WTC11 (cell line): ENCODE measurements at regions of chr5 and their contacts with region 1.

Region 1: DNA sequence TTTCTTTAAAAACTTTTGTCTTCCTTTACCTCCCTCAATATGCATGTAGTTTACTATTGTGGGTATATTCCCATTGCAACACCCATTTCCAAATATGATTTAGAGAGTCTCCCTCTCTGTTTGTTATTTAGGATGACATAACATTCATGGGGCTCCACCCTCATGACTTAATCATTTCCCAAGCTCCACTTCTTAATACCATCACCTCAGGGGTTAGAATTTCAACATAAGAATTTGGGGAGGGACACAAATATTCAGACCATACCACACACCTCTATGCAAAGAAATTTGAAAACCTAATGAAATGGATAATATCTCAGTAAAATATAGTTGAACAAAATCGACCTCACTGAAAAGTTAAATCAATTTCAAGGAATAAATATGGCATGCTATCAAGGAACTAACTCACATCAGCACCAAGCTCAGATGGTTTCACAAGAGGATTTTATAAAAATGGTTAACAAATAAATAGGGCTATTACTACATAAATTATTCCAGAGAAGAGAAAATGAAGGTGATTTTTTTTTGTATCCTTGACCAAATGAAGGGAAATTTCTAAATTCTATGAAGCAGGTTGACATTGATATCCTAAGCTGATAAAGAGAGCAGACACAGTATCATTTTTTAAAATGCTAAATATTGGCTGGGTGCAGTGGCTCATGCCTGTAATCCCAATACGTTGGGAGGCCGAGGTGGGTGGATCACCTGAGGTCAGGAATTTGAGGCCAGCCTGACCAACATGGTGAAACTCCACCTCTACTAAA is 20.2 kb upstream of the UBTD2 start:
- DNase-seq: no peak
- ATAC-seq: no peak
- H3K4me3 Mint-ChIP-seq: no peak overlapping the region
- H3K27ac Mint-ChIP-seq: no peak overlapping the region
- H3K4me1 Mint-ChIP-seq: no peaks in the 10 kb centered on the region; the same call in 1 of the 2 replicates
- H3K27me3 Mint-ChIP-seq: peaks cover 5% of the 10 kb centered on the region
- CTCF ChIP-seq: no peak

Region 2: GRCh38 chr5:172245703-172246125 is 58.0 kb before region 1 on chr5:
- CTCF ChIA-PET with region 1: interaction called, 10 read pairs
- POLR2A ChIA-PET with region 1: no interaction called
- DNase-seq: no peak
- ATAC-seq: no peak
- H3K4me3 Mint-ChIP-seq: no peak overlapping the region
- H3K27ac Mint-ChIP-seq: peak overlapping the region; percentile 87
- H3K4me1 Mint-ChIP-seq: peaks cover 3% of the 10 kb centered on the region
- H3K27me3 Mint-ChIP-seq: no peaks in the 10 kb centered on the region
- CTCF ChIP-seq: no peak

Region 3: DNA sequence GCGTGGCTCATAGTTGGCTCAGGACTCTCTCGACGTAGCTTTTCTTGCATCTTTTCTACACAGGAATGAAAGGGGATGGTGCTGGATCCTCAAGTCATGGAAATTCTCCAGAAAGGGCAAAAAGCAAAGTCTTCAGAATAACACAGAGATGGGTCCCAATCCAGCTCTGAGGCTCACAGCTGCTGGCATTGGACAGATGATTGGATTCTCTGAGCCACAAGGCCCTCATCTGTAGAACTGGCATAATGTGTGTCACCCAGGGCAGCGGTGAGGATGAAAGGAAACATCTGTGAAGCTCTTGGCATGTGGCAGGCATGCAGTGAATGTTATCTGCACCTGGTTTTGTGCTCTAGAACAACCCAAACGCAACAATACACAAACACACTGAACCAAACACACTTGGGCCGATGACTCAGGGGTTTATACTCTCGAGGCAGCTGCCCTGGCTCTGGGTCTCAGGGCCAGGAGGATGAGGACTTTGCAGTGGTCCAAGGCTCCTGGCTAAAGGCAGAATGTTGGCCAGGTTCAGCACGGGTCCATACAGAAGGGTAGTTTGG is 43.8 kb after region 1 on chr5:
- CTCF ChIA-PET with region 1: no interaction called
- POLR2A ChIA-PET with region 1: no interaction called
- DNase-seq: no peak
- ATAC-seq: no peak
- H3K4me3 Mint-ChIP-seq: no peak overlapping the region
- H3K27ac Mint-ChIP-seq: no peak overlapping the region
- H3K4me1 Mint-ChIP-seq: no peaks in the 10 kb centered on the region
- H3K27me3 Mint-ChIP-seq: no peaks in the 10 kb centered on the region
- CTCF ChIP-seq: no peak

Region 4: DNA sequence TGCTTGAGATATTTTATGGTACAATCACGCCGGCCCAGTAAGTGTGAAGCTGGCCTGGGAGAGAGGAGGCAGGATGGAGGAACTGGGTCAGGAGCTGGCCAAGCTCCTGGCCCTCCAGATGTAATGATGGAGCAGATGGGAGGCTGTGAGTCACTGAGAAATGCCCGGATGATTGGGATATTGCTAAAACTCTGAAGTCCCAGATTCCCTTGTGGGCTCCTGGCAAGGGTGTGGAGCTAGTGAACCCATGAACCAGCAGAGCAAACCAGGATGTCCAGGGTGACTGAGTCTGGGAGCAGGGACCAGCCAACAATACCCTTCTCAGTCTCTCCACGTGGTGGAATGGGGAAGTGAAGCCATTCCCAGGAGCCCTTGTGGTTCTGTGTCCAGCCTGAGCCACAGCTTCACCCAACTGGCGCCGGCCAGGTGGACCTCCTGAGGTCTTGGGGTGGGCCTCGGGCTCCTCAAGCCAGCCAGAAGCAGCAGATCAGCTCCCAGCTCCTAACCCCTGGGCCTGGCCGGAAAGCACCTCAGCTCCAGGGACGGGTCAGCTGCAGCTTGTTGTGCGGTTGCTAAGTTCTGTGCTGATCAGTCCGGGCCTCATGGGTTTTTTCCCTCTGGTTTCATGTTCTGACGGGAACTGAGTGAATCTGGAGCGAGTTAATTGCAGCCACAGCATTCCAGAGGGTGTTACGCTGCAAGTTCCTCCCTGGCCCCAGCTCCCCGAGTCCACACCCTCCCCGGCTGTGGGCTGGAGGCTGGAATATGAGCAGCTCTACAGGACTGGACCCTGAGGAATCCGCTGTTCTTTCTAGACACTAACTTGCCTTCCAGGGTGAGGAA is 429.6 kb after region 1 on chr5:
- CTCF ChIA-PET with region 1: no interaction called
- POLR2A ChIA-PET with region 1: no interaction called
- DNase-seq: no peak
- ATAC-seq: peak; percentile 33
- H3K4me3 Mint-ChIP-seq: no peak overlapping the region
- H3K27ac Mint-ChIP-seq: no peak overlapping the region
- H3K4me1 Mint-ChIP-seq: no peaks in the 10 kb centered on the region
- H3K27me3 Mint-ChIP-seq: peaks cover 9% of the 10 kb centered on the region; the same call in 1 of the 2 replicates
- CTCF ChIP-seq: no peak